Heart left ventricle (tissue), 16 donors: ENCODE measurements at regions of chr14 and their contacts with region 1.

Region 1: GRCh38 chr14:90758028-90758889 is 58.0 kb downstream of the TTC7B start:
- DNase-seq: peak; percentile 92 to 98 (median 95)
- ATAC-seq: peak; percentile 75 to 92 (median 91)
- H3K4me3 ChIP-seq: peak overlapping the region; percentile 15 to 74 (median 61)
- H3K27ac ChIP-seq: peak overlapping the region; percentile 91 to 98 (median 94)
- H3K4me1 ChIP-seq: peaks cover 0 to 31% (median 22%) of the 10 kb centered on the region in 12 donors
- H3K27me3 ChIP-seq: no peaks in the 10 kb centered on the region
- CTCF ChIP-seq: peak; percentile 81 to 97 (median 92)
- POLR2A ChIP-seq: peak in 1 of 2 donors; percentile 57

Region 2: DNA sequence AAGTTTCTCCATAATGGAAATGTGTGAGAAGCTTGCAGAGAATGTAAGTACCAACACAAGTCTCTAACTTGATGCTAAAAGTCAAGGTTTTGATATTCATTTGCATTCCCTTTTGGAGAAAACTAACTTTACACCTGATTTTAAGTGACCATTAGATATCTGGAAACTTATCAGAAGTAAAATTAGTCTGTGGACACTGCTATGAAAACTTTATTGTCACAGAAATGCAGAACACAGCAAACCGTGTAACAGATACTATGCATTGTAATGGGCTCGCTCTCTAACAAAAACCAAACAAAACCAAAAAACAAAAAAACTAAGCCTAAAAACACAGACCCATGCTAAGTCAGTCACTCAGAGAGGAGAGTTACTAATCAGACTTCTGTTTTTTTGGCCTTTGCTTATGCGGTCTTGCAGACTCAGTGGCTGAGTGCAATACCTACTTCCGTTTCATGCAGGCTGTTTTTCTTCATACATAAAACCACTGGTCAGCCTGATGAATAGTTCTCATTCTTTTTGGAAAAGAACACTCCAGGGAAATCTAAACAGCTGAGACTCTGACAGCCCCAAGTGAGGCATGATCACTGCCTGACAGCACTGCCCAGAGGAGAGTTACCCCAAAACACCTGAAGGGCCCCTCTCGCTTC is 462.3 kb before region 1 on chr14:
- intact Hi-C with region 1: loop called in 9 of 10 experiments (anchors 1 to 10 kb)
- DNase-seq: no peak
- ATAC-seq: no peak
- H3K4me3 ChIP-seq: no peak overlapping the region
- H3K27ac ChIP-seq: peak overlapping the region in 1 of 12 donors; percentile 77
- H3K4me1 ChIP-seq: peaks cover 0 to 36% (median under 1%) of the 10 kb centered on the region in 12 donors
- H3K27me3 ChIP-seq: no peaks in the 10 kb centered on the region
- CTCF ChIP-seq: no peak
- POLR2A ChIP-seq: no peak

Region 3: GRCh38 chr14:90331497-90332435 is 426.5 kb before region 1 on chr14 and contains the start of gene NRDE2:
- intact Hi-C with region 1: loop called in 1 of 10 experiments (anchors 5 kb)
- DNase-seq: peak; percentile 100
- ATAC-seq: peak; percentile 100
- H3K4me3 ChIP-seq: peak within 1 kb of the TSS; percentile 54 to 96 (median 76)
- H3K27ac ChIP-seq: peak within 1 kb of the TSS; percentile 77 to 96 (median 88)
- H3K4me1 ChIP-seq: peaks cover 0 to 20% (median 8%) of the 10 kb centered on the region in 12 donors
- H3K27me3 ChIP-seq: peaks cover 0 to 14% (median 0%) of the 10 kb centered on the region in 9 donors
- CTCF ChIP-seq: peak in 1 of 12 donors; percentile 33
- POLR2A ChIP-seq: peak in 1 of 2 donors; percentile 29
- total RNA-seq, gene NRDE2: 5.2 to 15.4 (median 10.7) TPM

Region 4: GRCh38 chr14:90697577-90698206 is 60.6 kb before region 1 on chr14:
- intact Hi-C with region 1: loop called in 3 of 10 experiments (anchors 5 kb)
- DNase-seq: peak; percentile 85 to 88 (median 87)
- ATAC-seq: peak; percentile 88 to 93 (median 89)
- H3K4me3 ChIP-seq: peak overlapping the region in 2 of 12 donors; percentile 4 to 14
- H3K27ac ChIP-seq: peak overlapping the region; percentile 17 to 89 (median 75)
- H3K4me1 ChIP-seq: peaks cover 4 to 50% (median 30%) of the 10 kb centered on the region in 12 donors
- H3K27me3 ChIP-seq: no peaks in the 10 kb centered on the region
- CTCF ChIP-seq: peak; percentile 91 to 98 (median 95)
- POLR2A ChIP-seq: no peak

Region 5: DNA sequence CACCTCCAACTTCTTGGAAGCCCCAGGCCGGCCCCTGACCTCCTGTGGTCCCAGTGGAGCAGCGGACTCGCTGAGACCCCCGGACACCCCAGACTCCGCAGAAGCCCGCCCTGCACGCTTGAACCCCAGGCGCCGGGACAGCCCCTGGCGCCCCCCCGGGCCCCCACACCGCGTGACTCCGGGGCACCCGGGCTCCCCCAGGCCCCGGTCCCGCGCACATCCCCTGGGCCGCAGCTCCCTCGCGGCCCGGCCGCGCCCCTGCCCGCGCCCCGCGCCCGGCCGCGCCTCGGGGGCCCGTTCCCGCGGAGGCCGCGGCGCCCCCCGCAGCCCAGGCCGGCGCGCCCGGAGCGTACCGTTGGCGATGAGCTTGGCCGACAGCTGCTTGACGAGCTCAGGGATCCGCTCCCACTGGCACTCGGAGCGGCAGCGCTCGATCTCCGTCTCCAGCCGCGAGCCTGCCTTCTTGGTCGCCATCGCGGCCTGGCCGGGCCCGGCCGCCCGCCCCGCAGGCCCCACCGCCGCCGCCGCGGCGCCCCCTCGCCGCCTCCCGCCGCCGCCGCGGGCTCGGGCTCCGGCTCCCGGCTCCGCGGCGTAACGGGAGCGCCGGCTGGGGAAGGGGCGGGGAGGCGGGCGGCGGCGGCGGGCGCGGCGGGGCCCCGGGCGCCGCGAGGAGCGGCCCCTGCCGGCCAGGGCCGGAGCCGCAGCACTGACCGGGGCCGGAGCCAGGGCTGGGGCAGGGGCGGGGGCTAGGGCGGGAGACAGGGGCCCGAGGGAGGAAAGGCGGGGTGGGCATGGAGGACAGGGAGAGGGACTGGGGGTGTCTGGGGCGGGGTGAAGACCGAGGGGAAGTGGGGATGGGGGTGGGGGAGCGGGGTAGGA is 57.8 kb after region 1 on chr14 and contains the start of gene TTC7B:
- intact Hi-C with region 1: loop called in 6 of 10 experiments (anchors 2 to 10 kb)
- DNase-seq: peak; percentile 50 to 73 (median 57)
- ATAC-seq: peak; percentile 57 to 86 (median 76)
- H3K4me3 ChIP-seq: peak within 1 kb of the TSS; percentile 56 to 97 (median 79)
- H3K27ac ChIP-seq: peak within 1 kb of the TSS in 4 of 12 donors; percentile 59 to 68 (median 60)
- H3K4me1 ChIP-seq: peaks cover 0 to 34% (median 14%) of the 10 kb centered on the region in 12 donors
- H3K27me3 ChIP-seq: no peaks in the 10 kb centered on the region
- CTCF ChIP-seq: peak in 8 of 12 donors; percentile 10 to 45 (median 28)
- POLR2A ChIP-seq: no peak
- total RNA-seq, gene TTC7B: 54.5 to 76.1 (median 67.9) TPM

Region 6: GRCh38 chr14:90850487-90850886 is 92.2 kb after region 1 on chr14:
- intact Hi-C with region 1: no loop called
- DNase-seq: no peak
- ATAC-seq: peak in 3 of 4 donors; percentile 31 to 92 (median 74)
- H3K4me3 ChIP-seq: no peak overlapping the region
- H3K27ac ChIP-seq: peak overlapping the region in 9 of 12 donors; percentile 7 to 58 (median 18)
- H3K4me1 ChIP-seq: peaks cover 0 to 25% (median 14%) of the 10 kb centered on the region in 12 donors
- H3K27me3 ChIP-seq: no peaks in the 10 kb centered on the region
- CTCF ChIP-seq: no peak
- POLR2A ChIP-seq: no peak

Region 7: DNA sequence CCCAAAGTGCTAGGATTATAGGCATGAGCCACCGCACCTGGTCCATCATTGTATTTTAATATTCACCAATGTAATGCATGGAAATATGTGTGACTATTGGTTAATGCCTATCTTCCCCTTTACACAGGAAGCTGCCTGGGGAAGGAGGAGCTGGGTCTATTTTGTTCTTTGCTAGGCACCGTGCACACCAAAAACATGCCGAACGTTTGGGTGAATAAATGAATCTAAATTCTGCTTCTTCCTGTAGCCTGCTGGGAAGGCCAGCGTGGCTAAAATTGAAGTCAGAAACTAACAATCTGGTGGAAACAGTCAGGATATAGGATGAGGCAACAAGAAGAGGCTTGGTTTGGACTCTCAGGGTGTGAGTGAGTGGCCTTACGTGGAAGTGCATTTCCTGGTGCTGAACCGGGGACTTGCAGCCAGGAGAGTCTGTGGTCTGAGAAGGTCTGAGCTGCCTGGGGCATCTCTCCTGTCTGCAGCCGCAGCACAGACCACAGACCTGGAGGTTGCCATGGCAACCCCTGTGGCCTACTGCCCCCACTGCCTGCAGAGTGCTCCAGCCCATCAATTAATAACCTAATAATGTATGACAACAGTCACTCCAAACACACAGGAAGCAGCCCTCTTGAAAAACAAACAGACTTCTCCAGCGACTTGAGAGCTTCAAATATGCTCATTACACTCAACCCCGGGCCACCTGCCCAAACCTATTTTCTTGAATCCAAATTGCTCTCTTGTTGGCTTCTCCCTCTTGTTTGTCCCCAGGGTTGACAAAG is 491.8 kb after region 1 on chr14:
- intact Hi-C with region 1: no loop called
- DNase-seq: no peak
- ATAC-seq: no peak
- H3K4me3 ChIP-seq: no peak overlapping the region
- H3K27ac ChIP-seq: peak overlapping the region in 6 of 12 donors; percentile 11 to 50 (median 34)
- H3K4me1 ChIP-seq: peaks cover 0 to 70% (median 11%) of the 10 kb centered on the region in 12 donors
- H3K27me3 ChIP-seq: peaks cover 0 to 6% (median 0%) of the 10 kb centered on the region in 9 donors
- CTCF ChIP-seq: no peak
- POLR2A ChIP-seq: no peak